ENCODE measurements at regions of chr1 and their contacts with region 1.

Region 1: DNA sequence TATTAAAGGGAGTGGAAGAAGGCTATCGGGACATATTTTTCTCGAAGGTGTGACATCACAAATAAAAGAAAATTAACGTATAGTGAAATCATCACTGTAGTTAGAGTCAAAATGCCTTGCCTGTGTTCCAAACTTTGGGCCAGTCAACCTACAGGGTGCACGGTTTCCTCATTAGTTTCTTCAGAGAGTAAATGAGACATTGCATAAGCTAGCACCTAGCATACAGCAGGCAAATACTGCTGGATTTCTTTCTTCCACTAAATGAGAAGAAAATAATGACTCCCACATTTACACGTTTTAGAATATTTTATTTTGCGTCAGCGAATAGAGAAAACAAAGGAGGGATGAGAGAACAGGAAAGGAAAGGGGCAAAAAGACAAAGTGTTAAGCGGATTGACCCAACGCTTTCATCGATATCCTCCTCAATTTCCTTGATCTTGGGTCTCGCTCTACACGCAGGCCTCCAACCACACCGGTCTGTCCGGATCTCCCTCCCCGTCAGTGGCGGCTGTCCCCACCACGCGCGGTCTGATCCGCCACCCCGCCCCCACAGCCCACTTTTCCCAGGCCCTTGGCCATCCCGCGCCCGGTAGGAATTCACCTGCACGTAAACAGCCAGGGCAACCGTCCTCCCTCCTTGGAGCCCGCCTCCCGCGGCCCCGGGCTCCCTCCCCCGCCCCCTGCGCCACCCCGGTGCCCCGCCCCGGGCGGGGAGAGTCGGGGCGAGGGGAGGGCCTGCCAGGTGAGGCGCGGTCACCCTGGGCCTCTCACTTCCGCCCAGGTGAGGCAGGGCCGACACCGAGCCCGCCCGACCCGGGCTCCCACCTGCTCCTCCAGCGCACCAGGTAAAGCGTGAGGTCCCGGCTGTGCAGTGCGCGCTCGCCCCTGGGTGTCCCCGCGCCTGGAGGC is at the start of gene PATJ:
- DNase-seq: peak; percentile 86
- H3K4me3 ChIP-seq: peak within 1 kb of the TSS; percentile 46
- H3K4me3 Mint-ChIP-seq: peak within 1 kb of the TSS; percentile 86
- H3K27ac Mint-ChIP-seq: peak within 1 kb of the TSS; percentile 87
- H3K4me1 ChIP-seq: peaks cover 22% of the 10 kb centered on the region
- H3K4me1 Mint-ChIP-seq: peaks cover 11% of the 10 kb centered on the region
- H3K27me3 ChIP-seq: no peaks in the 10 kb centered on the region
- H3K27me3 Mint-ChIP-seq: no peaks in the 10 kb centered on the region
- CTCF ChIP-seq: no peak
- total RNA-seq, gene PATJ: 31.6 and 34.5 TPM in 2 replicates

Region 2: GRCh38 chr1:61504852-61505390 is 237.0 kb before region 1 on chr1:
- CTCF ChIA-PET with region 1: no interaction called
- POLR2A ChIA-PET with region 1: no interaction called
- intact Hi-C with region 1: no loop called
- DNase-seq: no peak
- H3K4me3 ChIP-seq: no peak overlapping the region
- H3K4me3 Mint-ChIP-seq: no peak overlapping the region
- H3K27ac Mint-ChIP-seq: no peak overlapping the region
- H3K4me1 ChIP-seq: no peaks in the 10 kb centered on the region
- H3K4me1 Mint-ChIP-seq: no peaks in the 10 kb centered on the region
- H3K27me3 ChIP-seq: no peaks in the 10 kb centered on the region
- H3K27me3 Mint-ChIP-seq: no peaks in the 10 kb centered on the region
- CTCF ChIP-seq: no peak

Region 3: DNA sequence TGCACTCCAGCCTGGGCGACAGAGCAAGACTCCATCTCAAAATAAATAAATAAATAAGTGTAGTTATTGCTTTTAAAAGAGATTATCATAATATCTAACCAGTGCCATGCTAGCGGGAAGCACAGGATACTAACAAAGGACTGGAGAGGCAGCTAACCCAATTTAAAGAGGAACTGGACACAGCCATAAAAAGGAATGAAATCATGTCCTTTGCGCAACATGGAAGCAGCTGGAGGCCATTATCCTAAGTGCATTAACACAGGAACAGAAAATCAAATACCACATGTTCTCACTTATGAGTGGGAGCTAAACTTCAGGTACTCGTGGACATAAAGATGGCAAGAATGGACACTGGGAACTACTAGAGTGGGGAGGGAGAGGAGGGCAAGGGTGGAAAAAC is 71.9 kb before region 1 on chr1:
- CTCF ChIA-PET with region 1: no interaction called
- POLR2A ChIA-PET with region 1: no interaction called
- intact Hi-C with region 1: no loop called
- DNase-seq: no peak
- H3K4me3 ChIP-seq: no peak overlapping the region
- H3K4me3 Mint-ChIP-seq: no peak overlapping the region
- H3K27ac Mint-ChIP-seq: no peak overlapping the region
- H3K4me1 ChIP-seq: no peaks in the 10 kb centered on the region
- H3K4me1 Mint-ChIP-seq: no peaks in the 10 kb centered on the region
- H3K27me3 ChIP-seq: no peaks in the 10 kb centered on the region
- H3K27me3 Mint-ChIP-seq: no peaks in the 10 kb centered on the region
- CTCF ChIP-seq: no peak

Region 4: DNA sequence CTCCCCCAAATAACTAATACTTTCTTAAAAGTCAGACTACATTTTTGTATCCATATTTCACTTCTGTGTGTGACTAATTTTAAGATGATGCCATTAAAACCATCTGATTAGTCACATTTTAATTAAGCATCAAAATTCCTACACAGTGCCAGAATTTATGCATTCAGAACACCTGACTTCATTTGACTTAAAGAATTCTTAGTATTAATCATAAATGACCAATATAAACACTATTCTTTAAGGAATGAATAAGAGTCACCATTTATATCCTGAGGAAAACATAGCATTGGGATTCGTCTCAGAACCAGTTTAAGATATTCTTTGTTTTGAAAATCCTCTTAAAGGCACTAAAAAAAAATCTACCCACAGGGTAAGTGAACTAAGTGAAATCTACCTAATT is 54.1 kb before region 1 on chr1:
- CTCF ChIA-PET with region 1: no interaction called
- POLR2A ChIA-PET with region 1: no interaction called
- intact Hi-C with region 1: no loop called
- DNase-seq: no peak
- H3K4me3 ChIP-seq: no peak overlapping the region
- H3K4me3 Mint-ChIP-seq: no peak overlapping the region
- H3K27ac Mint-ChIP-seq: no peak overlapping the region
- H3K4me1 ChIP-seq: peaks cover 15% of the 10 kb centered on the region
- H3K4me1 Mint-ChIP-seq: peaks cover 7% of the 10 kb centered on the region
- H3K27me3 ChIP-seq: no peaks in the 10 kb centered on the region
- H3K27me3 Mint-ChIP-seq: no peaks in the 10 kb centered on the region
- CTCF ChIP-seq: no peak

Region 5: GRCh38 chr1:61699911-61700851 is 41.8 kb before region 1 on chr1:
- CTCF ChIA-PET with region 1: no interaction called
- POLR2A ChIA-PET with region 1: no interaction called
- intact Hi-C with region 1: loop called (anchors 5 kb)
- DNase-seq: peak in 1 of 2 experiments; percentile 29
- H3K4me3 ChIP-seq: no peak overlapping the region
- H3K4me3 Mint-ChIP-seq: no peak overlapping the region
- H3K27ac Mint-ChIP-seq: no peak overlapping the region
- H3K4me1 ChIP-seq: peaks cover 9% of the 10 kb centered on the region; the same call in 1 of the 2 replicates
- H3K4me1 Mint-ChIP-seq: peaks cover 13% of the 10 kb centered on the region
- H3K27me3 ChIP-seq: no peaks in the 10 kb centered on the region
- H3K27me3 Mint-ChIP-seq: no peaks in the 10 kb centered on the region
- CTCF ChIP-seq: no peak

Region 6: DNA sequence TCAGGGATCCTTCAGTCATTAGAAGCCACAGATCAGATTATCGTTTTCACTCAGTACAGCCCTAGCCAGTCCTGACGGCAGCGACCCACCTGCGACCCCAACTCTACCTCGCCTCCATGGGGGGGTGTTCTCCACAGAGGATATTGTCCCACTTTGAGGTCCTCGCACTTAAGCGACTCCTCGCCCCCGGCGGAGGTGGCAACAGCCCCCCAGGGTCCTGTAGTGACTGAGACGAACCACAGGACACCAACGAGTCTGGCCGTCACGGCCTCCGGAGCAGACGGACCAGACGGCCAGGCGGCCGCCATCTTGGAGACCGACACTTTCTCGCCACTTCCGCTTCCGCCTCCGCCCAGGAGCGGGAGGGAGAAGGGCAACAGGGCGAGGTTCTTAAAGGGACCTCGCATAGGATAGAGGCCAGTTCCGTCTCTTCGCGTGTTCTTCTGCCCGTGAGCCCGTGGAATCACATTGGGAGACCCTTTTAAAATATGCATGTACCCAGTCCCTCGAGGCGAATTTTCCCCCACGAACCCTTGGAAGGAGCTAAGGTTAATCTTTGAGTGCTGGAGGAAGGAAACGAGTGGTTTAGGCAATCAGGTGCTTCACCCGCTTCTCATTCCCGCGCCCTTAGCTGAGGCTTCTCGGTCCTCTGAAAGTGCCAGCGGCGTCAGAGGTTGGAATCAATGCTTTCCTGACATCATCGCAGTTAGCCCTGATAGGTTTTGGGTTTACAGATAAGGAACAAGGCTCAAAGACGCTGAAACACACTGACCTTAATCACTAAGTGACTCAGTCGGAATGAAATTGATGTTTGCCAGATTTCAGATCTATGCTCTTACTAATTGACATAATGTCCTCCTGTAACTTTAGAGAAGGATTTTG is 16.9 kb before region 1 on chr1 and contains the start of gene TM2D1:
- CTCF ChIA-PET with region 1: no interaction called
- POLR2A ChIA-PET with region 1: no interaction called
- intact Hi-C with region 1: loop called (anchors 1 kb)
- DNase-seq: peak; percentile 84 to 85
- H3K4me3 ChIP-seq: peak within 1 kb of the TSS; percentile 59
- H3K4me3 Mint-ChIP-seq: peak within 1 kb of the TSS; percentile 98
- H3K27ac Mint-ChIP-seq: peak within 1 kb of the TSS; percentile 100
- H3K4me1 ChIP-seq: no peaks in the 10 kb centered on the region
- H3K4me1 Mint-ChIP-seq: no peaks in the 10 kb centered on the region
- H3K27me3 ChIP-seq: no peaks in the 10 kb centered on the region
- H3K27me3 Mint-ChIP-seq: no peaks in the 10 kb centered on the region
- CTCF ChIP-seq: no peak
- total RNA-seq, gene TM2D1: 16.3 and 17.3 TPM in 2 replicates

Region 7: GRCh38 chr1:61782771-61783170 is 40.8 kb after region 1 on chr1:
- CTCF ChIA-PET with region 1: no interaction called
- POLR2A ChIA-PET with region 1: no interaction called
- intact Hi-C with region 1: no loop called
- DNase-seq: no peak
- H3K4me3 ChIP-seq: no peak overlapping the region
- H3K4me3 Mint-ChIP-seq: no peak overlapping the region
- H3K27ac Mint-ChIP-seq: no peak overlapping the region
- H3K4me1 ChIP-seq: no peaks in the 10 kb centered on the region
- H3K4me1 Mint-ChIP-seq: peaks cover 6% of the 10 kb centered on the region
- H3K27me3 ChIP-seq: no peaks in the 10 kb centered on the region
- H3K27me3 Mint-ChIP-seq: no peaks in the 10 kb centered on the region
- CTCF ChIP-seq: no peak

Region 8: GRCh38 chr1:62175568-62176179 is 433.7 kb after region 1 on chr1:
- CTCF ChIA-PET with region 1: interaction called, 12 read pairs
- POLR2A ChIA-PET with region 1: no interaction called
- intact Hi-C with region 1: no loop called
- DNase-seq: peak in 1 of 2 experiments; percentile 53
- H3K4me3 ChIP-seq: no peak overlapping the region
- H3K4me3 Mint-ChIP-seq: no peak overlapping the region
- H3K27ac Mint-ChIP-seq: no peak overlapping the region
- H3K4me1 ChIP-seq: no peaks in the 10 kb centered on the region
- H3K4me1 Mint-ChIP-seq: peaks cover 13% of the 10 kb centered on the region
- H3K27me3 ChIP-seq: no peaks in the 10 kb centered on the region
- H3K27me3 Mint-ChIP-seq: no peaks in the 10 kb centered on the region
- CTCF ChIP-seq: peak; percentile 65

Measured in Caco-2 (cell line).